ENCODE measurements at regions of chr1 and their contacts with region 1.

Region 1: GRCh38 chr1:935751-936231 is 12.1 kb downstream of the SAMD11 start:
- DNase-seq: no peak
- H3K4me3 ChIP-seq: no peak overlapping the region
- H3K27ac ChIP-seq: no peak overlapping the region
- H3K4me1 ChIP-seq: peaks cover 13 to 30% (median 22%) of the 10 kb centered on the region in 4 donors
- H3K27me3 ChIP-seq: peaks cover 91% of the 10 kb centered on the region
- CTCF ChIP-seq: no peak
- EP300 ChIP-seq: no peak
- POLR2A ChIP-seq: no peak

Region 2: GRCh38 chr1:904310-904950 is 31.4 kb before region 1 on chr1:
- in situ Hi-C with region 1: no loop called
- intact Hi-C with region 1: loop called (anchors 2 kb)
- DNase-seq: peak; percentile 83
- H3K4me3 ChIP-seq: peak overlapping the region in 3 of 4 donors; percentile 20 to 54 (median 34)
- H3K27ac ChIP-seq: peak overlapping the region in 3 of 4 donors; percentile 16 to 36 (median 19)
- H3K4me1 ChIP-seq: peaks cover 0 to 33% (median 20%) of the 10 kb centered on the region in 4 donors
- H3K27me3 ChIP-seq: peaks cover 60% of the 10 kb centered on the region
- CTCF ChIP-seq: peak; percentile 53 to 98 (median 93)
- EP300 ChIP-seq: no peak
- POLR2A ChIP-seq: no peak